GM10248 (cell line): ENCODE measurements at regions of chr3 and their contacts with region 1.

Region 1: DNA sequence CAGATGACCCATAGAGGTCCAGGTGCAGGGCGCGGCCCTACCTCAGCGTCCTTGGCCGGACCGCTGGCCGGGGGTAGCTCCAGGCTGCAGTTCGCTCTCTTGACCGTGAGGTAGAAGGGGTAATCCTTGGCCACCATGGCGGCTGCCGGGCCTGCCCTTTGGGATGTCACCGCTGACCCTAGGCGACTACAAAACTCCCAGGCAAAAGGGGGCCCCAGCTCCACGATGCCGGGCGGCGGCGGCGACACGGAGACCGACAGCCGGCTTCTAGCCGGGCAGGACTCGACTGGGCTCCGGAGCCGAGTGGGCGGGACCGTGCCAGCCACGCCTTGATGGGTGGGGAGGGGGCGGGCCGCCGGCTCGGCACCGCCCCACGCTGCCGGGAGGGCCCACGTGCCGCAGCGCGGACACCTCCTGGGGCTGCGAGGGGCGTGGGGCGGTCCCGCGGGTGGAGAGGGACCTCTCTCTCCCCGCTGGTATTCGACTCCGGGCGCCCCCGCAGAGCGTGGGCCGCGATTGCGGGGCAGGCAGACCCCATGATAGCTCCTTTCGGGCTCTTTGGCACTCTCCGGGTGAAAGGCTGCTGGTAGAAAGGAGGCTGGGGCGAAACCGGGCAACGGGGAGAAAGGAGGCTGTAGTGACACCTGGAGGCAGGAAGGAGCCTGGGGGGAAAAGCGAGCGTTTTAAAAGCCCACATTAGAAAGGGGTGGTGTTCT is at the start of gene ARHGEF3:
- DNase-seq: peak; percentile 93
- CTCF ChIP-seq: peak; percentile 51

Region 2: DNA sequence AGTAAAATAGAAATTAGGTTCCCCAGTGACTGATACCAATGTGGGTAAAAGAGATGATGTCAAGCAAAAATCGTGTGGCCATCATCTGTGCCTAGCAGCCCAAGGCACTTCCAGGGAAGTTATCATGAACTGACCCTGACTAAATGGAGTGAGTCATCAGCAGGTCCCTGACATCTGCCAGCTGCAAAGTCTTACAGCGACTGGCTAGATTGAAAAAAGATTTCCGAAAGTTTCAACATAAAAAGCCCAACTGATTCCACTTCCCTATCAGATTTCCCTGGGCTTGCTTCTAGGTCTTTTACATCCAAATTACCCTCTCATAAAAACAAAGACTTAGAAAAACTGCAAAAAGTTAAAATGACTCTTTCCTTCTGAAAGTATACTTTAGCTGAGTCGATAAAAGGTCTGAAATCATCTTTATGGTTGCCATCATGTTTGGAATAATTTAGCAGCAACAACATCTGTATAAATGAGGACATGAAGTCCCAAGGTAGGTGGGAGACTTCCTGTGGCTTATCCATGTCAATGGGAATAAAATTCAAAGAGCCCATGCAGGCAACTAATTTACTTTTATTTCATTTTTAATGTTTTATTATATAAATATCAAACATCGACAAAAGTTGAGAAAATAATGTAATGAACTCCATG is 676.3 kb before region 1 on chr3:
- CTCF ChIA-PET with region 1: no interaction called
- POLR2A ChIA-PET with region 1: no interaction called
- DNase-seq: no peak
- CTCF ChIP-seq: no peak

Region 3: DNA sequence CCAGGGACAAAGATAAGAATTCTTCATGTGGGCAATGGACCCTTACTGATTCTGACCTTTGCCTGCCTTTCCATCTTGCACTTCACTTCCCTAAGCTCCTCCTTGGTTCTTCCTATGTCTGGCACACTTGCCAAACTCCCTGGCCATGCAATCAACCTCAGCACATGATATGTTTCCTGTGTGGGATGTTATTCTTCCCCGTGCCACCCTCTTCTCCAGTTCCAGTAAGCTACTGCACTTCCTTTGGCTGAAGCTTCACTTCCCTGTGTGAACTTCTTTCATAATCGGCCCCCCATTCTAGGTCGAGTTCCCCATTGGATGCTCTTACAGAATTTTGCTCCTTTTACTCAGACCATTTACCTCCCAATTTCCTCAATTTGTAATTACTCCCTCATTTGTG is 108.1 kb before region 1 on chr3:
- CTCF ChIA-PET with region 1: interaction called, 213 read pairs
- POLR2A ChIA-PET with region 1: no interaction called
- DNase-seq: no peak
- CTCF ChIP-seq: no peak

Region 4: DNA sequence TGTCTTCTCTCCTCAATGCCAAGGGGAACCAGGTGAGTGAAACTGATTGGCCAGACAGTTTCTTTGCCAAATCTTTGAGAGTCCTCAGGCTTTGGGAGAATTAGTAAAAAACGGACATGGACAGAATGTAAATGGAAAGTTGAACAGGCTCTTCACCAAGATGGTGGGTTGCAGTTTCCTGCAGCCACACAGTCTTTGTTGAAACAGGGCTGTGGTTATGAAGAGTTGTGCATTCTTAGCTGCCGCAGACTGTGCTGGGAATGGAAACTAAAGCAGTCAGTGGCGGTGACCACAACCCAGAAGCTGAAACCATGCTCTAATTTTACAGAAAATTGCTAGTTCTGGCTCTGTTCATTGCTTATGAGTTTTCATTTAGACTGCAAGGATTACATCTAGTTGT is 76.6 kb before region 1 on chr3:
- CTCF ChIA-PET with region 1: interaction called, 20 read pairs
- POLR2A ChIA-PET with region 1: no interaction called
- DNase-seq: peak; percentile 72
- CTCF ChIP-seq: no peak

Region 5: GRCh38 chr3:56769116-56769707 is 32.6 kb before region 1 on chr3:
- CTCF ChIA-PET with region 1: interaction called, 28 read pairs
- POLR2A ChIA-PET with region 1: no interaction called
- DNase-seq: no peak
- CTCF ChIP-seq: no peak

Region 6: GRCh38 chr3:56837196-56837955 is 35.6 kb after region 1 on chr3:
- CTCF ChIA-PET with region 1: interaction called, 14 read pairs
- POLR2A ChIA-PET with region 1: no interaction called
- DNase-seq: peak; percentile 15
- CTCF ChIP-seq: no peak

Region 7: GRCh38 chr3:56988458-56989168 is 186.8 kb after region 1 on chr3:
- CTCF ChIA-PET with region 1: interaction called, 111 read pairs
- POLR2A ChIA-PET with region 1: no interaction called
- DNase-seq: peak; percentile 66
- CTCF ChIP-seq: peak; percentile 62

Region 8: DNA sequence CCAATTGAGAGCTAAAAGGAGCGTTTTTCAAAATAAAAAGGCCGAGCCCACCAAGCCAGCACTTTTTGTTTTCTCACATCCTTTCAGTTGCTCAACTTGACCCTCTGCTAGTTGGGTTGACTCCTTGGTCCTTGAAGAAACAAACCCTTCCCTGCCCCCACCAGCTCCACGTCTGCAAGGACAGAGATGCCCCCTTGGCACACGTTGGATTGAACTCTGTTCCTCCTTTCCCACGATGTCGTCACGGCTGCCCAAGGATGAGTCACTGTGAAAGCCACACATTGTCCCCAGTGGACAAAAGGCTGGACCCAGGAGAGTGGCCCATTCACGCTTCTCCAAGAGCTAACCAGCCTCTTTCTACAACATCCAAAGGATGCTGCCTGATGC is 215.6 kb after region 1 on chr3:
- CTCF ChIA-PET with region 1: no interaction called
- POLR2A ChIA-PET with region 1: no interaction called
- DNase-seq: no peak
- CTCF ChIP-seq: no peak